ENCODE measurements at regions of chr7 and their contacts with region 1.

Region 1: GRCh38 chr7:123557398-123558288 is at the start of gene NDUFA5:
- DNase-seq: peak; percentile 99
- ATAC-seq: peak; percentile 96
- H3K4me3 ChIP-seq: peak within 1 kb of the TSS; percentile 75 to 99 (median 96)
- H3K4me3 Mint-ChIP-seq: no peak within 1 kb of the TSS
- H3K27ac ChIP-seq: peak within 1 kb of the TSS; percentile 67 to 86
- H3K27ac Mint-ChIP-seq: no peak within 1 kb of the TSS
- H3K4me1 ChIP-seq: peaks cover 14 to 17% of the 10 kb centered on the region in 2 donors
- H3K4me1 Mint-ChIP-seq: peaks cover 9% of the 10 kb centered on the region
- H3K27me3 ChIP-seq: no peaks in the 10 kb centered on the region
- H3K27me3 Mint-ChIP-seq: peaks cover 16% of the 10 kb centered on the region
- CTCF ChIP-seq: no peak
- total RNA-seq, gene NDUFA5: 50.7 and 55.9 TPM in 2 replicates

Region 2: DNA sequence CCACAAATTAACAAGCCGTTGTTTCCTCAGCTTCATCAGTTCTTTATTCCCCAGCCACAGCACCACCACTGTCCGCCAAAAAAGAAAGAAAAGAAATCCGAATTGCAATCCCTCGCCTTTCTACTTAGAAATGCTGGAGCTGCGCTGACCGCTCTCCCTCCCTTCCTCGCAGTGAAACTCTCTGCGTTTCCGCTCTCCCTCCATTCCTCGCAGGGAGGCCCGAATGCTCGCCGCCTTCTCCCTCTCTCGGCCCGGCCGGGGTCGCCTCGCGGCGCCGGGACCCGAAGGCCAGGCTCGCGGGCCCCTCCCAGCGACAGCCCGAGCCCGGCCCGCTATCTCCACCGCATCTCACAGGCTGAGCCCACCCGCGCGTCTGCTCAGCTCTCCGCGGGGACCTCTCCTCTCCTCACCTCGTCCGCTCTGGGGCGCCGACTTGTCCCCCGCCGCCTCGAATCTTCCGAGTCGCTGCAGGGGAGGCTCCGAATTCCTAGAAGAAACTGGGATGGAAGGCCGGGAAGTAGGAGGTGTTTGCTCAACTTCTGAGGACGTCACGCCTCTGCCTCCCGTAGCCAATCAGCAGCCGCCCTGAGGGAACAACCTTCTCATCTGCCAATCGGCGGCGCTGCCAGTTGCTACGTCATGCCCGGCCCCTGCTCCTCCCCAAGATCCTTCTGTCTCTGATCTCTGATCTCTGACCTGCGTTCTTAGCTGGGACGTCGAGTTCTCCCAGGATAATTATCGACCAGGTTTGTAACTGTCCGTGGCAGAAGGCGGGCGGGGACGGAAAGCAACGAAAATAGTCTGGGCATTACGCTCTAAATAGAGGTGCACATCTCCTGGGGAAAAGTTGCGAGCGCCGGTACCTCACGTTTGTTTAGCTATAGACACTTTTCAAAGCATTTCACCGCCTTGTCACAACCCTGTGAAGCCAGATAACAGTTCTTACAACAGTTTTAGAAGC is 1413.6 kb before region 1 on chr7 and contains the start of gene AASS:
- CTCF ChIA-PET with region 1: no interaction called
- POLR2A ChIA-PET with region 1: no interaction called
- intact Hi-C with region 1: loop called (anchors 10 kb)
- DNase-seq: peak; percentile 90
- ATAC-seq: peak; percentile 95
- H3K4me3 ChIP-seq: peak within 1 kb of the TSS; percentile 78 to 98 (median 84)
- H3K4me3 Mint-ChIP-seq: peak within 1 kb of the TSS; percentile 97
- H3K27ac ChIP-seq: peak within 1 kb of the TSS; percentile 54 to 63
- H3K27ac Mint-ChIP-seq: peak within 1 kb of the TSS; percentile 82
- H3K4me1 ChIP-seq: peaks cover 9 to 13% of the 10 kb centered on the region in 2 donors
- H3K4me1 Mint-ChIP-seq: peaks cover 22% of the 10 kb centered on the region
- H3K27me3 ChIP-seq: no peaks in the 10 kb centered on the region
- H3K27me3 Mint-ChIP-seq: peaks cover 16% of the 10 kb centered on the region
- CTCF ChIP-seq: no peak
- total RNA-seq, gene AASS: 10.6 and 10.8 TPM in 2 replicates

Region 3: DNA sequence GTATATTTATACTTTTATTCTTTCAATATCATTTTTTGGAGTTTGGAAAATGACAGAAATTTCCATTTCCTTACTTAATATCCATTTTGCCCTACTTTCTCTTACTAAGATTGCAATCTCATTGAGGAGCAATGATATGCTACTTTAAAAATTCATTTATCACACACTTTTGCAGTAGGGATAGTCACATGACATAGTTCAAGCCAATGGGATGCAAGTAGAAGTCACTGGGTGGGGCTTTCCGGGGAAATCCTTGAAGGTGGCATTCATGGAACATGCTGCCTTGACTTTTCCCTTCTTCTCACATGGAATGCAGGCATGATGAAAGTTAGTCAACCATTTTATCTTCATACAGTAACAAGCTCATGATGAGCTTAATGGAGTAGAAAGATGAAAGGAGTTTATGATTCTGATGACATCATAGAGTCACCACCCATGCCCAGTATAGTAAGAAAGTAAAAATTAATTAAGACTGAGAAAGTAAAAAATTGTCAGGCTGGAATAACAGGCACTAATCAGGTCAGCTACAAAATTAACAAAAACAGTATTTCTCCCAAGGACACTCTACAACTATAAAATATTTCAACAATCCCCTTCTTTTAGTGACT is 56.7 kb before region 1 on chr7:
- CTCF ChIA-PET with region 1: no interaction called
- POLR2A ChIA-PET with region 1: no interaction called
- intact Hi-C with region 1: no loop called
- DNase-seq: no peak
- ATAC-seq: no peak
- H3K4me3 ChIP-seq: no peak overlapping the region
- H3K4me3 Mint-ChIP-seq: no peak overlapping the region
- H3K27ac ChIP-seq: no peak overlapping the region
- H3K27ac Mint-ChIP-seq: no peak overlapping the region
- H3K4me1 ChIP-seq: no peaks in the 10 kb centered on the region
- H3K4me1 Mint-ChIP-seq: no peaks in the 10 kb centered on the region
- H3K27me3 ChIP-seq: peaks cover 0 to 11% (median 0%) of the 10 kb centered on the region in 4 experiments
- H3K27me3 Mint-ChIP-seq: peaks cover 27% of the 10 kb centered on the region
- CTCF ChIP-seq: no peak

Region 4: DNA sequence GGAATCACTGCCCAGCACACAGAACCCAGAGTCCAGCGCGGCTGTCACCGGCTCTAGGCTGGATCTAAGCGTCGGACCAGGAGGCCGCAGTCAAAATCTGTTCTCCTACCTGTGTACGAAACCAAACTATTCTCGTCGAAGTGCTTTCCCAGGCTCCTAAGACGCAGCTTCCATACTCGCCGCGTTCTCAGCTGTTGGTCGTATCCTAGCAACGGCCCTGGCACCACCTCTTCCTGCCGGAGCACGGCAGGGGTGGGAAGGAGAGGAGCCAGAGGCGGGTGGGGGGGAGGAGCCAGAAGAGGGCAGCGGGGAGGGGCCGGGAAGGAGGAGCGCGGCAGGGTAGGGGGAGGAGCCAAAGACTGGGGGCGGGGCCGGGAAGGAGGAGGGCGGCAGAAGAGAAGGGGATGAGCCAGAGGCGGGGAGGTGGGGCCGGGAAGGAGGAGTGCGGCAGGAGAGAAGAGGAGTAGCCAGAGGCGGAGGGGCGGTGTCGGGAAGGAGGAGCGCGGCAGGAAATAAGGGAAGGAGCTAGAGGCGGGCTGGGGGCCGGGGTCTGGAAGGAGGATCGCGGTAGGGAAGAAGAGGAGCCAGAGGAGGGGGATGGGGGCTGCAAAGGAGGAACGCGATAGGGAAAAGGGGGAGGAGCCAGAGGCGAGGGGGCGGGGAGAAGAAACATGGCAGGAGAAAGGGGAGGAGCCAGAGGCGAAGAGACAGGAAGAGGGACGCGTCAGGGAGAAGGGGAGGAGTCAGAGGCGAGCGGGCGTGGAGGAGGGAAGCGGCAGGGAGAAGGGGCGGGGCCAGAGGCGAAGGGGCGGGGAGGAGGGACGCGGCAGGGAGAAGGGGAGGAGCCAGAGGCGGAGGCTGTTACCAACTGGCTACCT is 23.0 kb before region 1 on chr7 and contains the start of gene IQUB:
- CTCF ChIA-PET with region 1: interaction called, 8 read pairs
- POLR2A ChIA-PET with region 1: interaction called, 8 read pairs
- intact Hi-C with region 1: loop called (anchors 1 kb)
- DNase-seq: peak; percentile 92
- ATAC-seq: peak; percentile 82
- H3K4me3 ChIP-seq: peak within 1 kb of the TSS; percentile 67 to 81 (median 71)
- H3K4me3 Mint-ChIP-seq: peak within 1 kb of the TSS; percentile 93
- H3K27ac ChIP-seq: peak within 1 kb of the TSS; percentile 41 to 69
- H3K27ac Mint-ChIP-seq: peak within 1 kb of the TSS; percentile 5
- H3K4me1 ChIP-seq: peaks cover 13 to 19% of the 10 kb centered on the region in 2 donors
- H3K4me1 Mint-ChIP-seq: peaks cover 20% of the 10 kb centered on the region
- H3K27me3 ChIP-seq: peaks cover 0 to 8% (median 3%) of the 10 kb centered on the region in 4 experiments
- H3K27me3 Mint-ChIP-seq: peaks cover 8% of the 10 kb centered on the region
- CTCF ChIP-seq: no peak
- total RNA-seq, gene IQUB: 0.12 and 0.27 TPM in 2 replicates

Region 5: GRCh38 chr7:123674399-123675180 is 116.9 kb after region 1 on chr7:
- CTCF ChIA-PET with region 1: no interaction called
- POLR2A ChIA-PET with region 1: no interaction called
- intact Hi-C with region 1: no loop called
- DNase-seq: no peak
- ATAC-seq: no peak
- H3K4me3 ChIP-seq: no peak overlapping the region
- H3K4me3 Mint-ChIP-seq: no peak overlapping the region
- H3K27ac ChIP-seq: no peak overlapping the region
- H3K27ac Mint-ChIP-seq: no peak overlapping the region
- H3K4me1 ChIP-seq: no peaks in the 10 kb centered on the region
- H3K4me1 Mint-ChIP-seq: no peaks in the 10 kb centered on the region
- H3K27me3 ChIP-seq: no peaks in the 10 kb centered on the region
- H3K27me3 Mint-ChIP-seq: peaks cover 3% of the 10 kb centered on the region
- CTCF ChIP-seq: no peak

Region 6: GRCh38 chr7:123748734-123749536 is 191.3 kb after region 1 on chr7 and contains the start of gene WASL:
- CTCF ChIA-PET with region 1: interaction called, 3 read pairs
- POLR2A ChIA-PET with region 1: interaction called, 9 read pairs
- intact Hi-C with region 1: loop called (anchors 1 kb)
- DNase-seq: peak; percentile 94
- ATAC-seq: peak; percentile 84
- H3K4me3 ChIP-seq: peak within 1 kb of the TSS; percentile 78 to 92 (median 90)
- H3K4me3 Mint-ChIP-seq: peak within 1 kb of the TSS; percentile 98
- H3K27ac ChIP-seq: peak within 1 kb of the TSS; percentile 80 to 84
- H3K27ac Mint-ChIP-seq: peak within 1 kb of the TSS; percentile 94
- H3K4me1 ChIP-seq: peaks cover 22 to 32% of the 10 kb centered on the region in 2 donors
- H3K4me1 Mint-ChIP-seq: peaks cover 43% of the 10 kb centered on the region
- H3K27me3 ChIP-seq: no peaks in the 10 kb centered on the region
- H3K27me3 Mint-ChIP-seq: no peaks in the 10 kb centered on the region
- CTCF ChIP-seq: no peak
- total RNA-seq, gene WASL: 9.9 and 10.4 TPM in 2 replicates

Region 7: GRCh38 chr7:124929467-124930172 is 1372.0 kb after region 1 on chr7 and contains the start of gene POT1:
- CTCF ChIA-PET with region 1: no interaction called
- POLR2A ChIA-PET with region 1: no interaction called
- intact Hi-C with region 1: loop called (anchors 1 kb)
- DNase-seq: peak; percentile 99
- ATAC-seq: peak; percentile 99
- H3K4me3 ChIP-seq: peak within 1 kb of the TSS; percentile 71 to 98 (median 90)
- H3K4me3 Mint-ChIP-seq: peak within 1 kb of the TSS; percentile 91
- H3K27ac ChIP-seq: peak within 1 kb of the TSS; percentile 87 to 94
- H3K27ac Mint-ChIP-seq: peak within 1 kb of the TSS; percentile 87
- H3K4me1 ChIP-seq: peaks cover 7 to 12% of the 10 kb centered on the region in 2 donors
- H3K4me1 Mint-ChIP-seq: peaks cover 23% of the 10 kb centered on the region
- H3K27me3 ChIP-seq: no peaks in the 10 kb centered on the region
- H3K27me3 Mint-ChIP-seq: no peaks in the 10 kb centered on the region
- CTCF ChIP-seq: no peak
- total RNA-seq, gene POT1: 26.9 and 32.3 TPM in 2 replicates